Astrocyte of the cerebellum (primary cell): ENCODE measurements at regions of chr10 and their contacts with region 1.

Region 1: GRCh38 chr10:13189961-13190360 is 28.6 kb downstream of the MCM10 start:
- DNase-seq: no peak
- H3K4me3 ChIP-seq: no peak overlapping the region
- CTCF ChIP-seq: no peak

Region 2: GRCh38 chr10:13019289-13019688 is 170.7 kb before region 1 on chr10:
- in situ Hi-C with region 1: no loop called
- DNase-seq: no peak
- H3K4me3 ChIP-seq: no peak overlapping the region
- CTCF ChIP-seq: no peak

Region 3: DNA sequence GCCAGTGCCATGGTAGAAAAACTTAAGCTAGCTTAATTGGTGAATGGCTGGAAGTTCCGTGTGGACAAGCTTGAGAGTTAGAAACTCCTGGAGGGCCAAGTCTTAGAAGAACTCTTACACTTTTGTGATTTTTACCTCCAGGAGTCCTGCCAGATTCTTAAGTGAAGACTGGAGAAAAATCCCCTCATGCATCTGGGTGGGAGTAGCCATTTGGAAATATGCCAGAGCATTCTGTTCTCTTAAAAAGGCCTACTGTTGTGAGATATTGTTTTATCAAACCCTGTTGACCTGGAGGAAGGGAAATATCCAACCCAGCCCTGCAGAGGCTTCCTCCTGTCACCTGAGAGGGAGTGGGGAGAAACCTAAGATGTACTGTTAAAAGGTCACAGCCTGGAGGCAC is 46.2 kb before region 1 on chr10:
- in situ Hi-C with region 1: loop called (anchors 5 kb)
- DNase-seq: no peak
- H3K4me3 ChIP-seq: no peak overlapping the region
- CTCF ChIP-seq: no peak

Region 4: GRCh38 chr10:13224210-13224995 is 34.4 kb after region 1 on chr10:
- in situ Hi-C with region 1: no loop called
- DNase-seq: no peak
- H3K4me3 ChIP-seq: no peak overlapping the region
- CTCF ChIP-seq: no peak